SK-N-SH (cell line): ENCODE measurements at regions of chr11 and their contacts with region 1.

Region 1: GRCh38 chr11:44775366-44775984 is 48.7 kb downstream of the TSPAN18 start:
- DNase-seq: peak; percentile 53
- H3K4me3 ChIP-seq: no peak overlapping the region
- H3K27ac ChIP-seq: peak overlapping the region in 1 of 2 experiments; percentile 99; a peak in 3 of 4 replicates
- H3K4me1 ChIP-seq: peaks cover 21 to 77% of the 10 kb centered on the region in 2 experiments; a peak in 3 of 4 replicates
- H3K27me3 ChIP-seq: no peaks in the 10 kb centered on the region
- CTCF ChIP-seq: peak; percentile 74
- EP300 ChIP-seq: no peak
- RAD21 ChIP-seq: peak; percentile 50

Region 2: GRCh38 chr11:44747316-44747715 is 28.2 kb before region 1 on chr11:
- CTCF ChIA-PET with region 1: interaction called, 71 read pairs
- POLR2A ChIA-PET with region 1: interaction called, 4 read pairs
- DNase-seq: no peak
- H3K4me3 ChIP-seq: no peak overlapping the region
- H3K27ac ChIP-seq: peak overlapping the region in 1 of 2 experiments; percentile 85; a peak in 2 of 4 replicates
- H3K4me1 ChIP-seq: peaks cover 0 to 73% of the 10 kb centered on the region in 2 experiments; a peak in 2 of 4 replicates
- H3K27me3 ChIP-seq: no peaks in the 10 kb centered on the region; the same call in 1 of the 2 replicates
- CTCF ChIP-seq: no peak
- EP300 ChIP-seq: no peak
- RAD21 ChIP-seq: no peak

Region 3: GRCh38 chr11:44760917-44761550 is 14.4 kb before region 1 on chr11:
- CTCF ChIA-PET with region 1: interaction called, 101 read pairs
- POLR2A ChIA-PET with region 1: interaction called, 43 read pairs
- DNase-seq: peak; percentile 54
- H3K4me3 ChIP-seq: no peak overlapping the region
- H3K27ac ChIP-seq: peak overlapping the region in 1 of 2 experiments; percentile 96; a peak in 2 of 4 replicates
- H3K4me1 ChIP-seq: peaks cover 41 to 67% of the 10 kb centered on the region in 2 experiments
- H3K27me3 ChIP-seq: no peaks in the 10 kb centered on the region
- CTCF ChIP-seq: 0 out of 2 replicates have a peak, but pooled peaks have one; percentile 16
- EP300 ChIP-seq: peak in 1 of 2 experiments; percentile 36; a peak in 1 of 4 replicates
- RAD21 ChIP-seq: peak; percentile 43

Region 4: GRCh38 chr11:44840526-44841251 is 65.2 kb after region 1 on chr11:
- CTCF ChIA-PET with region 1: interaction called, 11 read pairs
- POLR2A ChIA-PET with region 1: interaction called, 7 read pairs
- DNase-seq: peak; percentile 49
- H3K4me3 ChIP-seq: no peak overlapping the region
- H3K27ac ChIP-seq: peak overlapping the region in 1 of 2 experiments; percentile 97; a peak in 2 of 4 replicates
- H3K4me1 ChIP-seq: peaks cover 14 to 29% of the 10 kb centered on the region in 2 experiments; a peak in 3 of 4 replicates
- H3K27me3 ChIP-seq: no peaks in the 10 kb centered on the region
- CTCF ChIP-seq: no peak; the same call in 1 of the 2 replicates
- EP300 ChIP-seq: peak in 1 of 2 experiments; percentile 58; a peak in 1 of 4 replicates
- RAD21 ChIP-seq: peak; percentile 50

Region 5: GRCh38 chr11:45319077-45319476 is 543.6 kb after region 1 on chr11:
- CTCF ChIA-PET with region 1: no interaction called
- POLR2A ChIA-PET with region 1: no interaction called
- DNase-seq: no peak
- H3K4me3 ChIP-seq: no peak overlapping the region
- H3K27ac ChIP-seq: no peak overlapping the region
- H3K4me1 ChIP-seq: no peaks in the 10 kb centered on the region
- H3K27me3 ChIP-seq: peaks cover 19% of the 10 kb centered on the region; the same call in 1 of the 2 replicates
- CTCF ChIP-seq: no peak
- EP300 ChIP-seq: no peak
- RAD21 ChIP-seq: no peak